Lower lobe of right lung (tissue), 2 donors: ENCODE measurements at regions of chr19 and their contacts with region 1.

Region 1: GRCh38 chr19:6292006-6292405 is 12.2 kb upstream of the MLLT1 start:
- DNase-seq: no peak
- ATAC-seq: no peak
- H3K4me3 ChIP-seq: no peak overlapping the region
- H3K27ac ChIP-seq: no peak overlapping the region
- H3K4me1 ChIP-seq: no peaks in the 10 kb centered on the region
- H3K27me3 ChIP-seq: no peaks in the 10 kb centered on the region
- CTCF ChIP-seq: no peak

Region 2: GRCh38 chr19:4759388-4760284 is 1532.4 kb before region 1 on chr19:
- intact Hi-C with region 1: no loop called
- DNase-seq: peak; percentile 96
- ATAC-seq: peak; percentile 97 to 99
- H3K4me3 ChIP-seq: peak overlapping the region; percentile 39
- H3K27ac ChIP-seq: no peak overlapping the region
- H3K4me1 ChIP-seq: peaks cover 6% of the 10 kb centered on the region
- H3K27me3 ChIP-seq: peaks cover 32% of the 10 kb centered on the region
- CTCF ChIP-seq: no peak

Region 3: DNA sequence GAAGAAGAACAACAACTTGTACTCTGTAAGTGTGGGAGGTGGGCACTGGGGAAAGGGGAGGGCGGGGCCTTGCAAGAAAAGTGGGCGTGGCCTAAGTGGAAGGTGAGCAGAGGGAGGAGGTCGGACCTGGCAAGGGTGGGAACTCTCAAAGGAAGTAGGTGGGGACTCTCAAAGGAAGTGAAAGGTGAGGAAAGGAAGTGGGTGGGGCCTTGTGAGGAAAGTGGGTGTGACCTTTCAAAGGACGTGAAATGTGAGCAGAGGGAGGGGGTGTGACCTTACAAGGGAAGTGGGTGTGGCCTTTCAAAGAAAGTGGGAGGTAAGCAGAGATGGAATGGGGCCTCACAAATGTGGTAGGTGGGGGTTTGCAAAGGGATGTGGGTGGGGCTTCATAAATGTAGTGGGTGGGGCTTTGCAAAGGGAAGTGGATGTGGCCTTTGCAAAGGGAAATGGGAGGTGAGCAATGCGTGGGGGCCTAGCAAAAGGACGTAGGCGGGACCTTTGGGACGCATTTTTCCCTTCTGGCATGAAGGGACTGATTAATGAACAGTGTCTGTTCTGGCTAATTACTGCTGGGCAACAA is 130.6 kb before region 1 on chr19:
- intact Hi-C with region 1: loop called (anchors 10 kb)
- DNase-seq: peak; percentile 68
- ATAC-seq: peak; percentile 69 to 83
- H3K4me3 ChIP-seq: no peak overlapping the region
- H3K27ac ChIP-seq: no peak overlapping the region
- H3K4me1 ChIP-seq: no peaks in the 10 kb centered on the region
- H3K27me3 ChIP-seq: no peaks in the 10 kb centered on the region
- CTCF ChIP-seq: no peak

Region 4: GRCh38 chr19:6218491-6219162 is 73.4 kb before region 1 on chr19:
- intact Hi-C with region 1: loop called (anchors 10 kb)
- DNase-seq: peak; percentile 91
- ATAC-seq: peak; percentile 77 to 85
- H3K4me3 ChIP-seq: no peak overlapping the region
- H3K27ac ChIP-seq: peak overlapping the region; percentile 56
- H3K4me1 ChIP-seq: peaks cover 61% of the 10 kb centered on the region
- H3K27me3 ChIP-seq: no peaks in the 10 kb centered on the region
- CTCF ChIP-seq: peak; percentile 99